SK-N-SH (cell line): ENCODE measurements at regions of chr19 and their contacts with region 1.

Region 1: GRCh38 chr19:55605207-55605636 is 225 bp upstream of the ZNF865 start:
- DNase-seq: peak; percentile 97
- H3K4me3 ChIP-seq: peak overlapping the region; percentile 88 to 93; a peak in 3 of 4 replicates
- H3K27ac ChIP-seq: peak overlapping the region; percentile 95 to 97
- H3K4me1 ChIP-seq: peaks cover 3 to 21% of the 10 kb centered on the region in 2 experiments; a peak in 3 of 4 replicates
- H3K27me3 ChIP-seq: no peaks in the 10 kb centered on the region
- CTCF ChIP-seq: no peak
- EP300 ChIP-seq: no peak
- RAD21 ChIP-seq: no peak

Region 2: GRCh38 chr19:55516878-55517620 is 88.2 kb before region 1 on chr19:
- CTCF ChIA-PET with region 1: interaction called, 21 read pairs
- POLR2A ChIA-PET with region 1: no interaction called
- DNase-seq: peak; percentile 100
- H3K4me3 ChIP-seq: peak overlapping the region; percentile 46 to 54
- H3K27ac ChIP-seq: peak overlapping the region; percentile 38 to 39; a peak in 1 of 4 replicates
- H3K4me1 ChIP-seq: peaks cover 0 to 11% of the 10 kb centered on the region in 2 experiments; a peak in 1 of 4 replicates
- H3K27me3 ChIP-seq: no peaks in the 10 kb centered on the region
- CTCF ChIP-seq: peak; percentile 83
- EP300 ChIP-seq: no peak
- RAD21 ChIP-seq: peak; percentile 91

Region 3: GRCh38 chr19:55580628-55581144 is 24.5 kb before region 1 on chr19 and contains the start of gene ZNF579:
- CTCF ChIA-PET with region 1: interaction called, 14 read pairs
- POLR2A ChIA-PET with region 1: interaction called, 7 read pairs
- DNase-seq: peak; percentile 95
- H3K4me3 ChIP-seq: peak within 1 kb of the TSS; percentile 80 to 83
- H3K27ac ChIP-seq: peak within 1 kb of the TSS; percentile 73 to 92
- H3K4me1 ChIP-seq: peaks cover 3 to 14% of the 10 kb centered on the region in 2 experiments; a peak in 1 of 4 replicates
- H3K27me3 ChIP-seq: no peaks in the 10 kb centered on the region
- CTCF ChIP-seq: no peak
- EP300 ChIP-seq: peak in 1 of 2 experiments; percentile 46; a peak in 1 of 4 replicates
- RAD21 ChIP-seq: no peak
- polyA plus RNA-seq, gene ZNF579: 3.5 and 5.9 TPM in 2 replicates

Region 4: DNA sequence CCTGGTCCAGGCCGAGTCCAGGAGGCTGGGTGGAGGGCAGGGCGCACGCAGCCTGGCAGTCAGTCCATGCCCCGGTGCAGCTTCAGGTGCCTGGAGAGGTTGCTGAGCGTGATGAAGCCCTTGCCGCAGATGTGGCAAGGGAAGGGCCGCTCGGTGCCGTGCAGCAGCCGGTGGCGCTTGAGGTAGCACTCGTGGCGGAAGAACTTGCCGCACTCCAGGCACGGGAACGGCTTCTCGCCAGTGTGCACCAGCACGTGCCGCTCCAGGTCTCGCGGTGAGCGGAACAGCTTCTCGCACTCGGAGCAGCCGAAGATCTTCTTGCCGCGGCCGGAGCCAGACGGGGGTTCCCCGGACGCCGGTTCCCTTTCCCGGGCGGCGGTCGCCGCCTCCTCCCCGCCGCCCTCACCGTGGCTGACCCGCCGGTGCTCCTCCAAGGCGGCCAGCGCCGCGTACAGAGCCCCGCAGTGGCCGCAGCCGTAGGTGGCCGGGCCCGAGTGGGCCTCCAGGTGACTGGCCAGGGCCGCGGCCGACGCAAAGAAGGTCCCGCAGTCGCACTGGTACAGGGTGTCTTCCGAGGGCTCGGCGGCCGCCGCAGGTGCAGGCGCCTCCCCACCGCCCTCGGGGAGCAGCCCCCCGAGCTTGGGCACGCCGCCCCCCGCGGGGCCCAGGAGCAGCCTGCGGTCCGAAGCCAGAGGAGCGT is 12.7 kb before region 1 on chr19:
- CTCF ChIA-PET with region 1: no interaction called
- POLR2A ChIA-PET with region 1: no interaction called
- DNase-seq: no peak
- H3K4me3 ChIP-seq: no peak overlapping the region
- H3K27ac ChIP-seq: no peak overlapping the region
- H3K4me1 ChIP-seq: no peaks in the 10 kb centered on the region; a peak in 1 of 4 replicates
- H3K27me3 ChIP-seq: no peaks in the 10 kb centered on the region
- CTCF ChIP-seq: no peak
- EP300 ChIP-seq: no peak
- RAD21 ChIP-seq: no peak

Region 5: DNA sequence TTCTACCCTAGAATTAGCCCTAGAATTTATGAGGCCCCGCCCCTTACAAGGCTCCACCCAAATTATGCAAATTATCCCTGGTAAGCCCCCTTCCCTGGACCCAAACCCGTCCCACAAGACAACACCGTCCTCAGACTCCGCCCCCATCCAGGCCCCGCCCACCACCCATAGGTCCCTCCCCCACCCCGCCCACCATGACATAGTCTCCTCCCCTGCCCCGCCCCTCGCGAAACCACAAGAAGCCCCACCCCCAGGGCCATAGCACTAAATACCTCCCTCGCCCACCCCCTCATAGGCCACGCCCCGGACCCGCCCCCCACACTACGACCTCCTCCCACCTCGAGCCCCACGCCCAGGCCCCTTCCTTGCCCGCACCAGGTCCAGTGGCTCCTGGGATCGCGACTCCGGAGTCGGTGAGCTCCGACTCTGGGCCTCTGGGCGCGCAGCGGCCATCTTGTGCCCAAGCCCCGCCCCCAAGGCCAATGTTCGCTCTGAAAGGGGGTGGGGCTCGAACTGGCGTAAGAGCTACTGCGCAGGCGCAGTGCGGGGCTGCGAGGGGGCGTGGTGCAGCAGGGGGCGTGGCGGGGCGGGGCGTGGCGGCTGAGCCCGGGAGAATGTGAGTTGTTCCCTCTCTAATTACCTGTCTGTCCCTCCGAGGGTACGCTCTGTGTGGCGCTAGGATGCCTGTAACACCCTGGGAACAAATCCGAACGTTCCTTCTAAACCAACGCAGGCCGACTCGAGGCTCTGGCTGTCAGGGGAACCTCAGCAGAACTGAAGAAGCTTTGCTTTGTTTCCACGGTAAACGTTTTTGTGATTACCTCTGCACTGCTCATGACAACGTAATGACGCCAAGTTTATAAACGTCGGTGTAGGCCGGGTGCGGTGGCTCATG is 19.1 kb after region 1 on chr19 and contains the start of gene ZNF784:
- CTCF ChIA-PET with region 1: interaction called, 30 read pairs
- POLR2A ChIA-PET with region 1: interaction called, 10 read pairs
- DNase-seq: peak; percentile 97
- H3K4me3 ChIP-seq: peak within 1 kb of the TSS; percentile 52 to 74
- H3K27ac ChIP-seq: peak within 1 kb of the TSS; percentile 87 to 90
- H3K4me1 ChIP-seq: peaks cover 0 to 2% of the 10 kb centered on the region in 2 experiments; a peak in 1 of 4 replicates
- H3K27me3 ChIP-seq: no peaks in the 10 kb centered on the region
- CTCF ChIP-seq: no peak
- EP300 ChIP-seq: no peak
- RAD21 ChIP-seq: no peak
- polyA plus RNA-seq, gene ZNF784: 5.0 and 5.5 TPM in 2 replicates

Region 6: GRCh38 chr19:55632463-55632834 is 27.2 kb after region 1 on chr19:
- CTCF ChIA-PET with region 1: interaction called, 31 read pairs
- POLR2A ChIA-PET with region 1: no interaction called
- DNase-seq: peak; percentile 62
- H3K4me3 ChIP-seq: peak overlapping the region in 1 of 2 experiments; percentile 30; a peak in 1 of 4 replicates
- H3K27ac ChIP-seq: peak overlapping the region in 1 of 2 experiments; percentile 26; a peak in 1 of 4 replicates
- H3K4me1 ChIP-seq: peaks cover 0 to 14% of the 10 kb centered on the region in 2 experiments; a peak in 1 of 4 replicates
- H3K27me3 ChIP-seq: no peaks in the 10 kb centered on the region
- CTCF ChIP-seq: peak; percentile 83
- EP300 ChIP-seq: no peak
- RAD21 ChIP-seq: peak; percentile 82